Vagina (tissue), 2 donors: ENCODE measurements at regions of chr1 and their contacts with region 1.

Region 1: DNA sequence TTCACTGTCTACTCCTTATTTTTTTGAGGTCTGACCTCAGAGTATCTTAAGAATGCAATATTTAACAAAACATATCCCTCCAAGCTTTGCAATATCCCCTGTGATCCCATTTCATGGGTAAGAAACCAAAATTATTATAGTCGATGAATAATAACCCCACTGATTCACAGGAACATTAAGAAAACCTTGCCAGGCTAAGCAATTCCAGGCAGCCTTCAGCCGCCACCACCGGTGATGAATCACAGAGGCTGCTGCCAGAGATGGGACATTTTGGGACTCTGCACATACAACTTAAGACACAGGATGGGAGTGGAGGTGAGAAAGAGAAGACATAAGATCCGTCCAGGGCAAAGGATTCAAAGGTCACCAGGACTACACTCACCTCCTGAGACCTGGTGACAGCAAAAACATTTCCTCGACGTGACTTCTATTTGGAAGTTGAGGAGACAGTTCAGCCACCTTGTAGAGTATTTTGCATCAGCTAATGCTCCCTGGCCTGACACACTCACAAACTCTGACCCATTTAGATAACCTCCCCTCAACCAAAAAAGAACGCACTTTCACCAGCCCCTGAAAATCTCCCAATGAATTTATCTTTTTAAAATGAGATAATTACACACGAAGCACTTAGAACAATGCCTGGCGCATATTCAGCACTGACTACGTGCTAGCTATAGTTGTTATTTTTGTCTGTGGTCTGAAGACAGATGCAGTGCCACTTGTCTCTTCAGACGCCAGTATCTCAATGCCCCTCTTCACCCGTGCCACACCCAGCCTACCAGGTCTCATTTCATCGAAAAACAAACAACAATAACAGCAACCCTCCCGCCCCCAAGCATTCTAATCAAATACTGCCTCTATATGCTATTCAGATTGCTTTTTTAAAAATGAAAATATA is 17.8 kb upstream of the OVAAL start:
- DNase-seq: peak in 1 of 2 donors; percentile 22
- H3K4me3 ChIP-seq: no peak overlapping the region
- H3K27ac ChIP-seq: no peak overlapping the region
- H3K4me1 ChIP-seq: peaks cover 8% of the 10 kb centered on the region
- H3K27me3 ChIP-seq: no peaks in the 10 kb centered on the region
- CTCF ChIP-seq: no peak
- POLR2A ChIP-seq: no peak

Region 2: GRCh38 chr1:182374101-182374834 is 1833.3 kb after region 1 on chr1:
- intact Hi-C with region 1: loop called (anchors 10 kb)
- DNase-seq: no peak
- H3K4me3 ChIP-seq: no peak overlapping the region
- H3K27ac ChIP-seq: no peak overlapping the region
- H3K4me1 ChIP-seq: no peaks in the 10 kb centered on the region
- H3K27me3 ChIP-seq: no peaks in the 10 kb centered on the region
- CTCF ChIP-seq: no peak
- POLR2A ChIP-seq: no peak